ENCODE measurements at regions of chr10 and their contacts with region 1.

Region 1: DNA sequence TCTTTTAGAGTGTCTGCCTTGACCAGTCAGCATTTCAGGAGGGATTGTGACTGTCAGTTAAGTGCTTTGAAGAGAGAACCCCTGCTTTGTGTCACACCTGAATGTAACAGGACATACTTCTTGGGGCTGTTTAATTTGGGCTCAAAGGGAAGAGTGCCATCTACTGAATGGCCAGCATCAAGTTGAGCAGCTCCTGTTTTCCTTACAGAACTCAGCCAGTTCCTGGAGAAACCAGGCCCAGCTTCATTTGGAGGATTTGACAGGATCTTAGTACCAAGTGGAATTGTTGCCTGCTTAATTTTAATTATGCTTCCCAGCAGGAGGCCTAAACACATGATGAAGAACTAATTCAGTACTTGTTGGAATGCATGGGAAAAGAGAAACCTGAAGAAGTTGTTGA is 8.3 kb downstream of the ADD3 start:
- DNase-seq: peak; percentile 48

Region 2: DNA sequence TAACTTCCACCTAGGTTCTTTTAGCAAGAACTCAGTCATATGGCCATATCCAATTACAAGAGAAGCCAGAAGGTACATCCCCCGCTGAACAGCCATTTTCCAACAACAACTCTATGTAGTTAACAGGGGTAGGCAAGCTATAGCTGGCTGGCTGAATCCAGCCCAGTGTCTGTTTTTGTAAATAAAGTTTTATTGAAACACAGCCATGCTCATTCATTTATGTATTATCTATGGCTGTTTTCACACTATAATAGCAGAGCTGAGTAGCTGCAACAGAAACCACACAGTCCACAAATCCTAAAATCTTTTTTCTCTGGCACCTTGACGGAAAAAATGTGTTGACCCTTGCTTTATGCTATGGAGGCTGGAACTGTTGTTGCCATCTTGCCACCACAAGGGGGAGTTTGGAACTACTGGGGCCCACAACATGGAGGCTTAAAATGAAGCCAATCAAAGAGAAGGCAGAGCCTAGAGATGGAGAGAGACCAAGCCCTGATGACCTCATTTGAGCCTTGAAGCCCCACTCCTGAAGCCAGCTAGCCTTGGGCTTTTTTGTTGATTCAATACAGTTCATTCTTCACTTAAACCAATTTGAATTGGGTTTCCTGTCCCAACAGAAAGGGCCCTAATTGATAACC is 59.5 kb before region 1 on chr10:
- in situ Hi-C with region 1: loop called (anchors 10 kb)
- DNase-seq: peak; percentile 73

Region 3: DNA sequence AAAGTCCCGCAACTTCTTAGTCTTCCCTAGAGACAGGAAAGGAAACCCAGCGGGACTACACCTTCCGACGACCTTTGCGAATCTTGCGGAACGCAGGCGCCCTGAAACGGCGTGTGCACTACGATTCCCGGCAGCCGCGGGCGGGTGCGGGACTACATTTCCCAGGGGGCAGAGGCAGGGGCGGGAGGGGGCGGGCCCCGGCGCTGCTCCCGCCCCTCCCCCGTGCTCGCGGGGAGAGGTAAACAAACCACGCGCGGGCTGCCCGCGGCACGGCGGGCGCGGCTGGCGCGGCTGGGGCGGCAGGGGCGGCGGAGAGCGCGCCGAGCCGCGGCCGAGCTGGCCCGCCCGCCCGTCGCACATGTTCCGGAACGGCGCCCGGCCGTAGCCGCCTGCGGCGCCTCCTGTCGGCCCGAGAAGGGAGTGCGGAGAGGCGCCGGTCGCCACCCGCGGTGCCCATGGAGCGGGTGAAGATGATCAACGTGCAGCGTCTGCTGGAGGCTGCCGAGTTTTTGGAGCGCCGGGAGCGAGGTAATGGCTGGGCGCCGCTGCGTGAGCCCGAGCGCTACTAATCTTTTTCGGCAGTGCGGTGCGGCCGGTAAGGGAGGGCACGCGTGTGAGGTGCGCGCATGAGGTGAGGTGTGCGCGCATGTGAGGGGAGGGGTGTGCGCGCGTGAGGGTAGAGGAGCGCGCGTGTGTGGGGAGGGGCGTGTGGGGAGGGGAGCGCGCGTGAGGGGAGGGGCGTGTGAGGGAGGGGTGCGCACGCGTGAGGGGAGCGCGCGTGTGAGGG is 209.9 kb after region 1 on chr10:
- in situ Hi-C with region 1: no loop called
- DNase-seq: peak; percentile 93

Region 4: DNA sequence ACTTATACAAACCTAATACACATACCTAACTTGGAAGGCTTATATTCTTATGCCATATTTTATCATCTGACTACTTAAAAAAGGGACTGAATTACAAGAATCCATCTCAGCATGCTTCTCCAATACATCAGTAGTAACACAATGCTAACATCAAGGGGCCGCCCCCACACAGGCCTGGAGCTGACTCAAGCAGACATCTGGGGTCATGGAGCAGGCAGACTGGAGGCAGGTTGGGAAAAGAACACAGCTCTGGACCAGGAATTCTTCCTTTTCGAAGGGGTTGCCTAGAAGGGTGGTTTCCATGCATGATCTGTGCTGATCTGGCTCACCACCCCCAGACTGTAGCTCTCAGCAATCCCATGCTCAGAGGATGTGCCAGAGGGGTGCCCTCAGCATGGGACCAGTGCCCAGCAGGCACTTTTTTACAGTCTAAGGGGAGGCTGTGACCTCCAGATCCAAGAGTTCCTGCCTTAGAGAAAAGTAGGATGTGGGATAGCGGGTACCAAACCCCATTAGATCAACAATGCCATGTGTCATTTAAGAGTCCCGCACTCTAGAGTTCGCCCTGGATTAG is 455.6 kb after region 1 on chr10:
- in situ Hi-C with region 1: no loop called
- DNase-seq: no peak